Activated naive CD4-positive, alpha-beta T cell treated with anti-CD3 and anti-CD28 coated beads, Interleukin-2, amount 10 ng/mL, durations not matched to agents 7 days and 5 days (primary cell): ENCODE measurements at regions of chr2 and their contacts with region 1.

Region 1: DNA sequence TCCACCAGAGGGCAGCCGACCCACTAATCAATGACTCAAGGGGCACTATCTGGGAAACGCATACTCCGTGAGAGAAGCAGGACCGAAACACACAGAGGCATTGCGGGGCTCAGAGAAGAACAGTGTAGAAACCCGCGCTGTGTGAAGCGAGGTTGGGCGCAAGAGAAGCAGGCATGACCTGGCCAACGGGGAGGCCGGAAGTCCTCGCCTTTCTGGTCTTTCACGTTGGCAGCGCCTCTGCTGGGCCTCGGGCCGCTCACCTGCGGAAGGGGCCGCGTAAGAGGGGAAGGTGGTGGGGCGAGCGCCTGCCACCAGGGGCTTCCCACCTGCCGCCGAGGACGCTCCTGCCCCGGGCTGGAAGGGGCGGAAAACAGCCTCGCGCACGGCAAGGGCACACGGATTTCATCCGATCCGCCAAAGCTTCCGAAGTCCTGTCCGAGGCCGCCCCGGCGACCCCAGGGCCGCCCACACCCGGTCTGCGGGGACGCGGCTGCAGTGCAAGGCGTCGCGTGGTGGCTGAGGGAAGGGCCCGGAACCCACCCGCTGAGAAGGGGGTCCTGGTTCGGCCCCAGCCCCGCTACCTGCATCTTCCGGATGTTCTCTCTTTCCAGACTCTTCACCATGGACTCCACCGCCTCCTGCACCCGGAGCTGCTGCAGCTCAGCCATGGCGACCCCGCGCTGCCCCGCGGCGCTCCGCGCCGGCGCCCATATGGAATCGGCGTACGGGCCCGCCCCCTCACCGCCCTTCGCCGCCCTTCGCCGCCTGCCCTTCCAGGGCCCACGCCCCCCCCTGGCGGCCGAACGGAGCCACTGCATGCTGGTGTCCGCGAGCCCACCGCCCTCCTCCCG is at the start of gene FAM136A:
- DNase-seq: peak; percentile 92
- H3K4me3 Mint-ChIP-seq: peak within 1 kb of the TSS; percentile 85
- H3K27ac Mint-ChIP-seq: peak within 1 kb of the TSS; percentile 92
- H3K4me1 Mint-ChIP-seq: peaks cover 45% of the 10 kb centered on the region
- H3K27me3 Mint-ChIP-seq: peaks cover 10% of the 10 kb centered on the region

Region 2: GRCh38 chr2:69914170-69914960 is 387.2 kb before region 1 on chr2:
- CTCF ChIA-PET with region 1: interaction called, 31 read pairs
- DNase-seq: peak; percentile 100
- H3K4me3 Mint-ChIP-seq: peak overlapping the region; percentile 83
- H3K27ac Mint-ChIP-seq: peak overlapping the region; percentile 92
- H3K4me1 Mint-ChIP-seq: peaks cover 39% of the 10 kb centered on the region
- H3K27me3 Mint-ChIP-seq: no peaks in the 10 kb centered on the region

Region 3: GRCh38 chr2:70340921-70341765 is 39.6 kb after region 1 on chr2:
- CTCF ChIA-PET with region 1: interaction called, 19 read pairs
- DNase-seq: peak; percentile 54
- H3K4me3 Mint-ChIP-seq: no peak overlapping the region
- H3K27ac Mint-ChIP-seq: no peak overlapping the region
- H3K4me1 Mint-ChIP-seq: no peaks in the 10 kb centered on the region
- H3K27me3 Mint-ChIP-seq: peaks cover 49% of the 10 kb centered on the region

Region 4: GRCh38 chr2:70647873-70648481 is 346.4 kb after region 1 on chr2:
- CTCF ChIA-PET with region 1: interaction called, 123 read pairs
- DNase-seq: peak; percentile 85
- H3K4me3 Mint-ChIP-seq: no peak overlapping the region
- H3K27ac Mint-ChIP-seq: no peak overlapping the region
- H3K4me1 Mint-ChIP-seq: no peaks in the 10 kb centered on the region
- H3K27me3 Mint-ChIP-seq: peaks cover 19% of the 10 kb centered on the region

Region 5: GRCh38 chr2:70806013-70806412 is 504.4 kb after region 1 on chr2:
- CTCF ChIA-PET with region 1: no interaction called
- DNase-seq: no peak
- H3K4me3 Mint-ChIP-seq: no peak overlapping the region
- H3K27ac Mint-ChIP-seq: no peak overlapping the region
- H3K4me1 Mint-ChIP-seq: no peaks in the 10 kb centered on the region
- H3K27me3 Mint-ChIP-seq: peaks cover 26% of the 10 kb centered on the region

Region 6: GRCh38 chr2:70948337-70949003 is 646.9 kb after region 1 on chr2:
- CTCF ChIA-PET with region 1: interaction called, 12 read pairs
- DNase-seq: peak; percentile 83
- H3K4me3 Mint-ChIP-seq: peak overlapping the region; percentile 39
- H3K27ac Mint-ChIP-seq: no peak overlapping the region
- H3K4me1 Mint-ChIP-seq: peaks cover 12% of the 10 kb centered on the region
- H3K27me3 Mint-ChIP-seq: peaks cover 53% of the 10 kb centered on the region